ENCODE measurements at regions of chr5 and their contacts with region 1.

Region 1: GRCh38 chr5:99060306-99061261 is 131.8 kb upstream of the CHD1 start:
- DNase-seq: peak; percentile 86
- H3K4me3 Mint-ChIP-seq: no peak overlapping the region
- H3K27ac Mint-ChIP-seq: no peak overlapping the region
- H3K4me1 Mint-ChIP-seq: peaks cover 2% of the 10 kb centered on the region
- H3K27me3 Mint-ChIP-seq: peaks cover 6% of the 10 kb centered on the region

Region 2: DNA sequence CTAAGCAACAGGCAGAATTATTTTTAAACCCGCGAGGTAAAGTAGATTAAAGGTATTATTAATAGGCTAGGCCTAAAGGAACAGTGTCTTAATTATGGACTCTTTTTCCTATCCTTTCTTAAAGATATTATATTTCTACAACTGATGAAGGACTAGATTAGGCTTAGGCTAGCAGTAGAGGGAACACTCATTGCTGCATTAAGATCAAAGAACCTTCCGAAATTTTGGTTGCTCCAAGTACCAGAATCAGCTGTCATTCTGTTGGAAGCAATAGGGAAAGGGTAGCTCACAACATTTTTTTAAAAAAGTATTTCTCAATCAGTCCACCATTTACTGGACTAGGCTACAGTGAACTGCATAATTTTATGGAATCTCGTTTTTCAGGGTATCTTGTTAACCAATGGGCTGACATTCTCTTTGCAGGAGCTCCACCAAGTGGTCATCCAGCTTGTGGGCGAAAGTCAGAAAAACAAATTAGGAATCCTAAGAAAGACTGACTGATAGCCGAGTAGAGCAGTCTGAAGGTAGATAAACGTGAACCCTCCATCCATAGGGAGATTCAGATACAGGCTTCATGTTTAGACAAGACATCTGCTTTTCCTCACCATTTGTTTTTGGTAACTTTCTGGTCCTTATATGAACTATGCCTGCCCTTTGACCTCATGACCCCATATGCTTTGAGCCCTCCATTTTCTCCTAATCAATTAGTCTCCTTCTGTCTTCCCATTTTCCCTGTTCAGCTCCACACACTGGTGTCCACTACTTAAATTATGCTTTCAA is 28.2 kb before region 1 on chr5:
- CTCF ChIA-PET with region 1: interaction called, 11 read pairs
- POLR2A ChIA-PET with region 1: interaction called, 10 read pairs
- DNase-seq: peak; percentile 28
- H3K4me3 Mint-ChIP-seq: peak overlapping the region; percentile 76
- H3K27ac Mint-ChIP-seq: peak overlapping the region; percentile 93
- H3K4me1 Mint-ChIP-seq: peaks cover 66% of the 10 kb centered on the region
- H3K27me3 Mint-ChIP-seq: no peaks in the 10 kb centered on the region

Region 3: DNA sequence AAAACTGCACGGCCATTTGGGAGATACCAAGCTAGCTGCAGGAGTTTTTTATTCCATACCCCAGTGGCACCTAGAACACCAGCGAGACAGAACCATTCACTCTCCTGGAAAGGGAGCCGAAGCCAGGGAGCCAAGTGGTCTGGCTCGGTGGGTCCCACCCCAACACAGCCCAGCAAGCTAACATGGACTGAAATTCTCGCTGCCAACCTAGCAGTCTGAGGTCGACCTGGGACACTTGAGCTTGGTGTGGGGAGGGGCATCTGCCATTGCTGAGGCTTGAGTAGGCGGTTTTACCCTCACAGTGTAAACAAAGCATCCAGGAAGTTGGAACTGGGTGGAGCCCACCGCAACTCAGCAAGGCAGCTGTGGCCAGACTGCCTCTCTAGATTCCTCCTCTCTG is 22.9 kb before region 1 on chr5:
- CTCF ChIA-PET with region 1: interaction called, 11 read pairs
- POLR2A ChIA-PET with region 1: interaction called, 10 read pairs
- DNase-seq: peak; percentile 86
- H3K4me3 Mint-ChIP-seq: no peak overlapping the region
- H3K27ac Mint-ChIP-seq: peak overlapping the region; percentile 70
- H3K4me1 Mint-ChIP-seq: peaks cover 56% of the 10 kb centered on the region
- H3K27me3 Mint-ChIP-seq: peaks cover 6% of the 10 kb centered on the region